AG04449 (cell line): ENCODE measurements at regions of chr15 and their contacts with region 1.

Region 1: DNA sequence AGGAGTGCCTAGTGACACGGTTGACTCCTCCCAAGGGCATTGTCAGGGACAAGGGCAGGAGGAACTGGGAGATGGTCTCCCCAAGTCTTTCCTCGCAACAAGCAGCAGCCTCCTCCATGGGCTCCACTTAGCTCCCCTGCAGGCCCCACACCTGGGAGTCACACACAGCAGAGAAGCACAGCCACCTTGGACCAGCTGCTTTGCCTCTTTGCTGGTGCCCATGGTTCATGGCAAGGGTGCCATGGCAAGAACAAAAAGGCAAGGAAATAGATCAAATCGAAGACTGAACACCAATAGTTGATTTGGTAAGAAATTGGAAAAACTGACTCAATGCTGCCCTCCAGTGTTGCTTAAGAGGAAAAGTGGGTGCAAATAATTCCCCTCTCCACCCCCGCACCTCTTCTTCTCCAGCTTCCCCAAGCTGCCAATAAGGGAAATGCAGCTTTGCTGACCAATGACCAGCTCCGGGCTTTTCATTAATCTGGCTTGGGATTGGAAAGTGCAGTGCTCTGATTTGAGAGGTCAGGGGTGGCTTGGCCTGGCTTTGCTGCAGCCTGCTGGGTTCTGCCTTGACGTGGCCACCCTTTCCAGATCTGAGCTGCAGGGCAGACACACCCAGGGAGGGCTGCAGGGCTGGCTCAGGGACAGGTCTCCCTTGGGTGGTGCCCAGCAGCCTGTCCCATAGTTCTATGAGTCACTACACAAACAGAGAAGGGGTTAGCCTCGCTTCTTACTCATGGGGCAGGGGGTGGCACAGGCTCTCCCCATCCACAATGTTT is 162.0 kb downstream of the KLF13 start:
- DNase-seq: peak; percentile 61
- H3K4me3 ChIP-seq: no peak overlapping the region
- CTCF ChIP-seq: peak; percentile 74

Region 2: GRCh38 chr15:31200735-31201151 is 287.9 kb before region 1 on chr15:
- CTCF ChIA-PET with region 1: interaction called, 68 read pairs
- POLR2A ChIA-PET with region 1: no interaction called
- DNase-seq: no peak
- H3K4me3 ChIP-seq: no peak overlapping the region
- CTCF ChIP-seq: peak; percentile 57

Region 3: GRCh38 chr15:31236184-31237042 is 252.2 kb before region 1 on chr15:
- CTCF ChIA-PET with region 1: interaction called, 14 read pairs
- POLR2A ChIA-PET with region 1: no interaction called
- DNase-seq: peak; percentile 66
- H3K4me3 ChIP-seq: no peak overlapping the region; the same call in 1 of the 2 replicates
- CTCF ChIP-seq: no peak

Region 4: GRCh38 chr15:31332020-31332680 is 156.5 kb before region 1 on chr15:
- CTCF ChIA-PET with region 1: interaction called, 10 read pairs
- POLR2A ChIA-PET with region 1: no interaction called
- DNase-seq: no peak
- H3K4me3 ChIP-seq: no peak overlapping the region
- CTCF ChIP-seq: no peak

Region 5: GRCh38 chr15:31396881-31397560 is 91.6 kb before region 1 on chr15:
- CTCF ChIA-PET with region 1: interaction called, 28 read pairs
- POLR2A ChIA-PET with region 1: no interaction called
- DNase-seq: no peak
- H3K4me3 ChIP-seq: no peak overlapping the region
- CTCF ChIP-seq: no peak

Region 6: GRCh38 chr15:31472636-31473384 is 15.8 kb before region 1 on chr15:
- CTCF ChIA-PET with region 1: interaction called, 167 read pairs
- POLR2A ChIA-PET with region 1: no interaction called
- DNase-seq: no peak
- H3K4me3 ChIP-seq: no peak overlapping the region
- CTCF ChIP-seq: no peak